ENCODE measurements at regions of chr5 and their contacts with region 1.

Region 1: GRCh38 chr5:160357861-160358411 is 12.5 kb downstream of the C1QTNF2 start:
- DNase-seq: no peak

Region 2: DNA sequence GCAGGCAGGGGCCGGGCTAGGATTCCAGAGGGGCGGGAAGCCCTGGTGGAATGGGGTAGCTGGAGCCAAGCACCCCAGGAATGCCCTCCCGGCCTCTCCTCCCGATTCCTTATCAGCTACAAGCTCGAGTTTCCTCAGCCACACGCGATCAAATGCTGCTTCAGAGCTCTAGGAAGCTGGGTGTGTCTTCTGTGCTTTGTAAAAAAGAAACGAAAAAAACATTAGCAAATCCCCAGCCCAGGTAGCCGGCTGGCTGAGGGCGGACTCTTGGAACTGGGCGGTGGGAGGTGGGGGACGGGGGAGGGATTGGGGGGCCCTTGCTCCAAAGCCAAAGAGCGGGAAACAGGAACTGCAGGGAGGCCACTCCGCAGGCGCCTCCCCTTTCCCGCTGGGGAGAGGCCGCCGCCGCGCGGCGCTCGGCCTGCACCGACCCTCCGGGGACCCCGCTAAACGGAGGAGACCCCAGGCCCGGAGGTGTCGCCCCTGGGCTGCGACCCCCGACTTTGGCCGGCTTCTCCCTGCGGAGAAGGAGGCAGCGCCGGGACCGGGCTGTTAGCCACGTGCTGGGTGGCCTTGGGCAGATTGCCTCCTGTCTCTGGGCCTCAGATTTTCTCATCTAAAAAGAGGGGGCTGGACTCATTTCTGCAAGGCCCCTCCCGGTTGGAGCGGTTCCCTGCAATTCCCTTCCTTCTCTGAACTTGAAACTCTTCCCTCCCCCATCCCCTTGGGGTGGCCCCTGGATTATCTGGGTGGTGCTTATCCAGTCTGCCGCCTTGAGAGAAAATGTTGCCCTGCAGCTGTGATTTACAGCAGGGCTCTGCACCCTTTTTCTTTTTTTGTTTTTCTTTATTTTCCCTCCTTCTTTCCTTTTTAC is 169.6 kb before region 1 on chr5:
- in situ Hi-C with region 1: loop called (anchors 10 kb)
- DNase-seq: no peak